CD4-positive, alpha-beta memory T cell (primary cell): ENCODE measurements at regions of chr5 and their contacts with region 1.

Region 1: DNA sequence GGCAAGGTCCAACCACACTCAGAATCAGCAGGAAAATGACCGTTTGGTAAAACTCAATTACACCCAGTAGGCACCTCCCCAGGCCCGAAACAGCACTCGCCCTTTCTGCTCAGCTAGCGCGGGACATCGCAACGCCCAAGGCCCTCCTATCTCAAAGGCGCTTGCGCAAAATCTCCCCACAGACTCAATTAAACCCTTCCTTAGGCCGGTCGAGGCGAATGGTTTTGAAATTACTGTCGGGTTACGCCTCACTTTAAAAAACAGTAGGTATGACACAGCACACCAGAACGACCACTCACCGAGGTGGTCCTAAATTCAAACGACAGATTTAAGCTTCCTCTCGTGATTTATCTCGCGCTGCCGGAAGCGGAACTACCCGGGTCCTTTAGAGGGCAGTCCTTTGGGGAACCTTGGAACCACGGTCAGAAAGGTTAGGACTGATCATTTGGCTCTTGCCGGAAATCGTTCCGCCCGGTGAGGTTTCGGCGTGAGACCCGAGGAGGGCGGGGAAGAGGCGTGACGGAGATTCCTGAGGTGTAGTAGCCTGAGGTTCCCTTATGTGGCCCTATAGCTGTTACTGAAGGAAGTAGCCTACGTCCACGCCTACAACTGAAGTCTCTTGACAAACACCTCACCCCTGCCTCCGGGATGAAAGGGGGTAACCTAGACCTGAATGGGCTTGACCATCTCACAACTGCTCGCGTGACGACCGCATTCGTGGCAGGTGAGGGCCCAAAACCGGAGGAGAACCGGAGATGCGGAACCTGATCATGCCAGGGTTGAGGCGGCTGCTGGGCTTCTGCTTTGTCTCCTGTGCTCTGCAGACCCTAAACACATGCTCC is at the starts of genes GIN1 and PPIP5K2:
- DNase-seq: peak; percentile 97 to 98 (median 98)
- H3K4me3 ChIP-seq: peak within 1 kb of the TSS; percentile 92 to 99
- H3K4me3 Mint-ChIP-seq: peak within 1 kb of the TSS; percentile 91 to 100 (median 98)
- H3K27ac ChIP-seq: peak within 1 kb of the TSS; percentile 81
- H3K27ac Mint-ChIP-seq: peak within 1 kb of the TSS; percentile 94 to 100 (median 99)
- H3K4me1 ChIP-seq: peaks cover 47% of the 10 kb centered on the region
- H3K4me1 Mint-ChIP-seq: peaks cover 31 to 63% (median 46%) of the 10 kb centered on the region in 4 donors
- H3K27me3 ChIP-seq: no peaks in the 10 kb centered on the region
- H3K27me3 Mint-ChIP-seq: no peaks in the 10 kb centered on the region
- total RNA-seq, gene GIN1: 14.8 to 15.2 TPM
- total RNA-seq, gene PPIP5K2: 64.1 to 66.5 TPM

Region 2: DNA sequence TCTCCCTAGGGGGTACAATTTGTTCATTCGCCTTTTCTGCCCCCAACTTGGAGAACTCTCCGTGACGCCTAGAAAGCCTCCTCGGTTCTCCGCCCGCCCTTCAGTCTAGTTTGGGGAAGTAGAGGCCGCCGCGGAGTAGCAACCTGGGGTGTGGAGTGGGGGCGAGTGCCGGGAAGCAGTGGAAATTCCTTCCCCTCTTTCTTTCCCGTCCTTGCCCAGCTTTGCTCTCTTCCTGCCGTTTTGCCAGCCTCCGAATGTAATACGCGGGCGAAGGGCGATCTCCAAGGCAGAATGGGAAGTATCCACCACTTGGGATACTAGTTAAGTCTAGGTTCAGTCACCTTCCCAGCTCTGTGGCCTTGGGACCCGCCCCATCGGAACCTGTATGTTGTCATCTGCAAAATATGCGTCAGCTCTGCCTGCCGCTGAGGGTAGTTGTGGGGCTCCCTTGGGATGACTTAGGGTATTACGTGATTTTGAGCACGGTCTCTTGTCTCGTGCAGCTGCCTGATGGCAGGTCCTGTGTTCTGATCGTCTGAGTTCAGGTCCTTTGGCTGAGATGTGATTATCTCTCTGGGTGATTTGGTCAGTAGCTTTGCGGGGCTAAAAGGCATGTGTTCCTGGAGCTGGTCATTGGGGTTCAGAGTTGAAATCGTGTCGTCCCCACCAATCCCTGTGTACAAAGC is 364.2 kb before region 1 on chr5:
- CTCF ChIA-PET with region 1: interaction called, 6 read pairs
- POLR2A ChIA-PET with region 1: interaction called, 23 read pairs
- intact Hi-C with region 1: loop called (anchors 1 kb)
- DNase-seq: peak; percentile 55 to 85 (median 60)
- H3K4me3 ChIP-seq: peak overlapping the region; percentile 12 to 77
- H3K4me3 Mint-ChIP-seq: peak overlapping the region; percentile 95 to 98 (median 96)
- H3K27ac ChIP-seq: peak overlapping the region; percentile 69
- H3K27ac Mint-ChIP-seq: peak overlapping the region; percentile 86 to 97 (median 95)
- H3K4me1 ChIP-seq: peaks cover 46% of the 10 kb centered on the region
- H3K4me1 Mint-ChIP-seq: peaks cover 33 to 60% (median 45%) of the 10 kb centered on the region in 4 donors
- H3K27me3 ChIP-seq: no peaks in the 10 kb centered on the region
- H3K27me3 Mint-ChIP-seq: peaks cover 2 to 3% of the 10 kb centered on the region in 2 donors

Region 3: GRCh38 chr5:103132684-103133083 is 12.7 kb after region 1 on chr5:
- CTCF ChIA-PET with region 1: interaction called, 3 read pairs
- POLR2A ChIA-PET with region 1: interaction called, 12 read pairs
- intact Hi-C with region 1: no loop called
- DNase-seq: no peak
- H3K4me3 ChIP-seq: no peak overlapping the region
- H3K4me3 Mint-ChIP-seq: peak overlapping the region in 5 of 8 donors; percentile 5 to 52 (median 45)
- H3K27ac ChIP-seq: no peak overlapping the region
- H3K27ac Mint-ChIP-seq: peak overlapping the region in 4 of 7 donors; percentile 38 to 90 (median 64)
- H3K4me1 ChIP-seq: peaks cover 6% of the 10 kb centered on the region
- H3K4me1 Mint-ChIP-seq: peaks cover 24 to 40% (median 30%) of the 10 kb centered on the region in 4 donors
- H3K27me3 ChIP-seq: no peaks in the 10 kb centered on the region
- H3K27me3 Mint-ChIP-seq: no peaks in the 10 kb centered on the region

Region 4: GRCh38 chr5:103258368-103258956 is 138.5 kb after region 1 on chr5 and contains the start of gene MACIR:
- CTCF ChIA-PET with region 1: interaction called, 9 read pairs
- POLR2A ChIA-PET with region 1: interaction called, 35 read pairs
- intact Hi-C with region 1: loop called (anchors 1 kb)
- DNase-seq: peak; percentile 90 to 94 (median 93)
- H3K4me3 ChIP-seq: peak within 1 kb of the TSS; percentile 34 to 79
- H3K4me3 Mint-ChIP-seq: peak within 1 kb of the TSS; percentile 85 to 97 (median 90)
- H3K27ac ChIP-seq: peak within 1 kb of the TSS; percentile 52
- H3K27ac Mint-ChIP-seq: peak within 1 kb of the TSS; percentile 77 to 93 (median 82)
- H3K4me1 ChIP-seq: peaks cover 13% of the 10 kb centered on the region
- H3K4me1 Mint-ChIP-seq: peaks cover 10 to 21% (median 15%) of the 10 kb centered on the region in 4 donors
- H3K27me3 ChIP-seq: no peaks in the 10 kb centered on the region
- H3K27me3 Mint-ChIP-seq: peaks cover 0 to 6% of the 10 kb centered on the region in 2 donors
- total RNA-seq, gene MACIR: 2.9 to 3.4 TPM